ENCODE measurements at regions of chr11 and their contacts with region 1.

Region 1: DNA sequence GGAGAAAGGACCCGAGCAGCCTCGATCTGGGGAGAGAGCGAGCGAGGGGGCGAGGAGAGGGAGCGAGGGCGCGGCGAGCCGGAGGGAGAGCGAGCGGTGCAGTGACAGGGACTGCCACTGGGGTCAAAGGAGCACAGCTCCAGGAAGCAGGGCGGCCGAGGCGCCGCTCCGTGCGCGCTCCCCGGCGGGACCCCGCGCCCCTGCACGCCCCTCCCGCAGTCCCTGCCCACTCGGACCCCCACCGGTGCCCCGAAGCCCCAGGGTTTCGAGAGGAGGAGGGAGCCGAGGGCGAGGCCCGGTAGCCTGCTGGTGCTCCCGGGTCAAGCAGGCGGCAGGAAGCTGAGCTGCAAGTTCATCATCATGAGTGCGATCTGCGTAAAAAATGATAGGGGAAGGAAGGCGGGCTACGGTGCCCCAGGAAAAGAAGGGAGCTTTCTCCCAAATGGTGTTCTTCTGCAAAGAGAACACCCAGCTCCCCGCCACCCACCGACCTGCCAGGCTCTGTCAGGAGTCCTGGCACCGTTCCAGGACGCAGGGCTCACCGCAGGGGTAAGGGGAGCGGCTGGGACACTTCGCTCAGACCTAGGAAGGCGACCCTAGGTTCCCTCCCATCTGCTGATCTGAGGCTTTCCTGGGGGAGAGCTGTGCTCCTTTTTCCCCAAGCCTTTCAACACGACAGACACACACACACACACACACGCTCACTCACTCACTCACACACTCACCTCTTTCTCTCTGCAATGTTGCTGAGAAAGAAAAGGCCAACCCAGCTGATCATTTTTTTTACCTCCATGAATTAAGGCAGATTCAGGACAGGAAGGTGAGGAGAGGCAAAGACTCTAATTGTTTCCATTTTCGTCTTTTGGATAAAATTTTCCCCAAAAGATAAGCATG is at the start of gene MPPED2:
- DNase-seq: peak; percentile 29
- ATAC-seq: peak; percentile 67
- H3K4me3 Mint-ChIP-seq: peak within 1 kb of the TSS; percentile 73
- H3K27ac Mint-ChIP-seq: no peak within 1 kb of the TSS
- H3K4me1 Mint-ChIP-seq: peaks cover 13% of the 10 kb centered on the region
- H3K27me3 Mint-ChIP-seq: peaks cover 48% of the 10 kb centered on the region
- CTCF ChIP-seq: no peak
- total RNA-seq, gene MPPED2: 0.37 and 1.7 TPM in 2 replicates

Region 2: GRCh38 chr11:30346068-30346688 is 240.3 kb before region 1 on chr11:
- CTCF ChIA-PET with region 1: no interaction called
- POLR2A ChIA-PET with region 1: no interaction called
- intact Hi-C with region 1: loop called (anchors 10 kb)
- DNase-seq: no peak
- ATAC-seq: no peak
- H3K4me3 Mint-ChIP-seq: no peak overlapping the region
- H3K27ac Mint-ChIP-seq: no peak overlapping the region
- H3K4me1 Mint-ChIP-seq: peaks cover 38% of the 10 kb centered on the region
- H3K27me3 Mint-ChIP-seq: no peaks in the 10 kb centered on the region
- CTCF ChIP-seq: peak; percentile 50

Region 3: GRCh38 chr11:30635401-30635989 is 49.0 kb after region 1 on chr11:
- CTCF ChIA-PET with region 1: no interaction called
- POLR2A ChIA-PET with region 1: no interaction called
- intact Hi-C with region 1: no loop called
- DNase-seq: no peak
- ATAC-seq: no peak
- H3K4me3 Mint-ChIP-seq: no peak overlapping the region
- H3K27ac Mint-ChIP-seq: no peak overlapping the region
- H3K4me1 Mint-ChIP-seq: no peaks in the 10 kb centered on the region
- H3K27me3 Mint-ChIP-seq: no peaks in the 10 kb centered on the region
- CTCF ChIP-seq: no peak

Region 4: GRCh38 chr11:30650266-30650665 is 63.8 kb after region 1 on chr11:
- CTCF ChIA-PET with region 1: no interaction called
- POLR2A ChIA-PET with region 1: no interaction called
- intact Hi-C with region 1: no loop called
- DNase-seq: no peak
- ATAC-seq: no peak
- H3K4me3 Mint-ChIP-seq: no peak overlapping the region
- H3K27ac Mint-ChIP-seq: no peak overlapping the region
- H3K4me1 Mint-ChIP-seq: no peaks in the 10 kb centered on the region
- H3K27me3 Mint-ChIP-seq: no peaks in the 10 kb centered on the region
- CTCF ChIP-seq: no peak

Measured in activated B cell treated with CpG ODN at 0.5 μM for 24 hours (primary cell).